Mucosa of descending colon (tissue), 3 donors: ENCODE measurements at regions of chr4 and their contacts with region 1.

Region 1: DNA sequence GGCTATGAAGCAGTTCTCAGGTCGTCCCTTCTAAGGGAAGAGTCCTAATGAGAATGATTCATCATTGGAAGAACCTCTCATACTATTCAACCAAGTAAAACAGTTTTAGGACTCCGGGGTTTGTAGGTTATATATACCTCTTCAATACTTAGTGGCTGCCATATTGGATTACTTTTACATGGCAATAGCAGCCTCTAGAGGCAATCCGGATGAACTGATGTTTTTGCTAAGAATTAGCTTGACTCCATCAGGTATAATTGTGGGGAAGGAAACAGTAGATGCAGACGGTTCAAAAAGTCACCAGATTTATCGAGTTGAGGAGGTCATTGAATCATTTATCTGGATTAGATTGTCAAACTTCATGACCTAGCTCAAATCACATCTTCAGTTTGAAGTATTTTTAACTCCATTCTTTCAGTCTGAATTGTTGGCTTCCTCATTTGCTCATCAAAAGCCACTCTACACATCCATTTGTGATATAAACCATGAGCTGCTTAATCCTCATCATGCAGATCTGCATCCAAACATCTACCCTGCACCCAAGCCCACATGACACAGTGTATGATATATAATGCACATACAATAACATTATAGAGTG is 28.4 kb downstream of the GUCY1B1 start:
- DNase-seq: peak in 1 of 3 donors; percentile 39
- ATAC-seq: peak; percentile 65
- H3K4me3 ChIP-seq: no peak overlapping the region
- H3K4me1 ChIP-seq: no peaks in the 10 kb centered on the region
- CTCF ChIP-seq: peak; percentile 20

Region 2: DNA sequence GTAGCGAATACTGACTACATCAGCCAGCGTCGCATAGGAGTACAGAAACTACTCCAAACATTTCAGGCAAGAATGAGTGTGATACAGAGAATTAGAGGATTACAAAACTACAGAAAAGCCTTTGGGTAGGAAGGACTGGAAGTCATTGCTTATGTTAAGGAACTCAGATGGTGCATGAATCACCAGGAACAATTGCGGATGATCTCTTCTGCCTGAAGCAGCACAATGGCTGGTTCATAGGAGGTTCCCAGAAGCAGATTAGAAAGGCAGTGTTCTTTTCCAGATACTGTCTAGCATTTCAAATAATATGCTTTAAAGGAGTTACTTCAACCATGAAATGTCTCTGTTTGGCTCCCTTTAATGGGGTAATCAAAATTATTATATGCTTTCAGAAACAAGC is 367.9 kb before region 1 on chr4:
- intact Hi-C with region 1: loop called in 1 of 2 experiments (anchors 10 kb)
- DNase-seq: no peak
- ATAC-seq: no peak
- H3K4me3 ChIP-seq: no peak overlapping the region
- H3K4me1 ChIP-seq: no peaks in the 10 kb centered on the region
- CTCF ChIP-seq: no peak

Region 3: DNA sequence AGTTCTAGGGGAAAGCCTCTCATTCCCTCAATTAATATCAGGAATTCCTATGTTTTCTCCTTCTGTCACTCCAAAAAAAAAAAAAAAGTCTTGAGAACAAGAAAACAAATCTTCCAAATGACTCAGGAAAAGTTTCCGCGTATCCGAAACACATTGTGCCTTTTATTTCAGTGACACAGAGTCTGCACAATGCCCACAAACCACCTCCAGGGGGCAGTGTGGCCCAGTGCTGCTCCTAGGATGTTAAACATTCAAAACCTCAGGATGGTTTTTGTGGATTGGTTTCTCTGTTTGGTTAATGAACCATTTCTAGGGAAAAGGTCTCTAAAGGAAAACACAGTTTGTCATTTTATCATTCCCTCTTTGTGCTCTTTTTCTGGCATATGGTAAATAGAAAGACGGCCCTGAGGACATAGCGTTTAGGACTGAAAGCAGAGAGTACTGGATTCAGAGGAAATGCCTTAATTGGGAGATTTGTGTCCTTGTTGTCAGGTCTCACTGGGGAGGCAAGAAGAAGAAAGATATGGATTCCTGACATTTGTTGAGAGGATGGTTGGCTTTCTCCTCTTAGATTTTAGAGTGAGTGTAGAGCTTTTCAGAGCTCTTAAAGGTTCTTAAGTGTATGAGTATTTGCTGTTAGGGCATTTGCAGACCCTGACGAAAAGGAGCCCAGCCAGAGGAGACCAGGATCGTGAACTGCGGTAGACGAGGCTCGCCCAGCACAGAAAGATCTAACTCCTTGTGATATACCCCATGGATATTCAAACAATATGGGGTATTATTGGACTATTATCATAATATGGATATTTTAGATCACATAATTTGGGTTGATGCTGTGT is 344.7 kb before region 1 on chr4:
- intact Hi-C with region 1: loop called in 1 of 2 experiments (anchors 1 kb)
- DNase-seq: peak; percentile 64 to 86 (median 81)
- ATAC-seq: peak; percentile 86
- H3K4me3 ChIP-seq: no peak overlapping the region
- H3K4me1 ChIP-seq: no peaks in the 10 kb centered on the region
- CTCF ChIP-seq: peak; percentile 91

Region 4: DNA sequence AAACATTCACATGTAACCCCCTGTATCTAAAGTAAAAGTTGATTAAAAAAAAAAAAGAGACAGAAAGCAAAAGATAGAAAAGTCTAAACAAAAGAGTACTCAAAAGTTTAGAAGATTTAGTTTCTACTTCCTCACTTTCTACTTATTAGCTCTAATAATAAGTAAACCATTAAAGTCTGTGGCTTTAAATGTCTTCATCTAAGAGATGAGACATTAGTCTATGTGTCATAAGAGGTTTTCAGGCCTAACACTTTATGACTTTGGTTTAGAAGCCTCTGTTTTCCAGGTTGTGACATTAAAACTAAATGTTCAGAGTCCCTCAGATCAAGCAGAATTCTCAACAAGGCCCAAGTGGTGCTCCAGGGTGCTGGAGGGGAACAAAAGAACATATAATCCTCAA is 162.7 kb before region 1 on chr4:
- intact Hi-C with region 1: no loop called
- DNase-seq: no peak
- ATAC-seq: no peak
- H3K4me3 ChIP-seq: no peak overlapping the region
- H3K4me1 ChIP-seq: no peaks in the 10 kb centered on the region
- CTCF ChIP-seq: no peak

Region 5: DNA sequence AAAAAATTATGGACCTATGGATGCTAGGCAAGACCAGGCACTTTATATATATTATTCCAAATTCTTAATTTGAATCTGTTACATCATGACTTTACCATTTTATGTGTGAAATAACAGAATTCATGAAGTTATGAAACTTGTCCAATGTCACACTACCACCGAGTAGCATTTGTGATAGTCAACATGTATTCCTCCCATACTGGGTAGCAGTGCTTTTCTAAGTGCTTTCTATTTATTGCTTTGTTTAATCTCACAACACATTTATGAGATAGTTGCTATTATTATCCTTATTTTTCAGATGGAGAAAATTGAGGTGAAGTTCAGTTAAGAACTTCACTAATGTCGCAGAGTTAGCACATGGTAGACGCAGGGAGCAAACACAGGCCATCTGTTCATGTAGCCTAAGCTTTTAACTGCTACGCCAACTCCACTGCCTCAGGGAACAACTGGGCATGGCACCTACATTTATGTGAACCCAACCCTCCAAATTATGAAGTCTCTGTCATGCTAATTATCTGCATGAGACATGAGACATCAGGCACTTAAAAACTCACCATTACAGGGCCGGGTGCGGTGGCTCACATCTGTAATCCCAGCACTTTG is 99.7 kb before region 1 on chr4:
- intact Hi-C with region 1: loop called in 1 of 2 experiments (anchors 10 kb)
- DNase-seq: no peak
- ATAC-seq: no peak
- H3K4me3 ChIP-seq: no peak overlapping the region
- H3K4me1 ChIP-seq: no peaks in the 10 kb centered on the region
- CTCF ChIP-seq: no peak